SK-N-SH (cell line): ENCODE measurements at regions of chr17 and their contacts with region 1.

Region 1: GRCh38 chr17:7989781-7990655 is 12.4 kb upstream of the GUCY2D start:
- DNase-seq: peak; percentile 93
- H3K4me3 ChIP-seq: peak overlapping the region; percentile 57 to 72
- H3K27ac ChIP-seq: peak overlapping the region in 1 of 2 experiments; percentile 47; a peak in 1 of 4 replicates
- H3K4me1 ChIP-seq: peaks cover 0 to 4% of the 10 kb centered on the region in 2 experiments; a peak in 1 of 4 replicates
- H3K27me3 ChIP-seq: no peaks in the 10 kb centered on the region
- CTCF ChIP-seq: peak; percentile 93
- EP300 ChIP-seq: no peak; a peak in 1 of 4 replicates
- RAD21 ChIP-seq: peak; percentile 59

Region 2: GRCh38 chr17:7745748-7746470 is 244.1 kb before region 1 on chr17:
- CTCF ChIA-PET with region 1: interaction called, 24 read pairs
- POLR2A ChIA-PET with region 1: no interaction called
- DNase-seq: no peak
- H3K4me3 ChIP-seq: no peak overlapping the region
- H3K27ac ChIP-seq: peak overlapping the region; percentile 13 to 61; a peak in 3 of 4 replicates
- H3K4me1 ChIP-seq: peaks cover 6 to 29% of the 10 kb centered on the region in 2 experiments; a peak in 2 of 4 replicates
- H3K27me3 ChIP-seq: no peaks in the 10 kb centered on the region
- CTCF ChIP-seq: peak; percentile 42; the same call in 1 of the 2 replicates
- EP300 ChIP-seq: no peak
- RAD21 ChIP-seq: no peak

Region 3: GRCh38 chr17:7803981-7804380 is 186.0 kb before region 1 on chr17:
- CTCF ChIA-PET with region 1: no interaction called
- POLR2A ChIA-PET with region 1: no interaction called
- DNase-seq: no peak
- H3K4me3 ChIP-seq: no peak overlapping the region
- H3K27ac ChIP-seq: no peak overlapping the region
- H3K4me1 ChIP-seq: no peaks in the 10 kb centered on the region
- H3K27me3 ChIP-seq: no peaks in the 10 kb centered on the region; the same call in 1 of the 2 replicates
- CTCF ChIP-seq: no peak
- EP300 ChIP-seq: no peak
- RAD21 ChIP-seq: no peak

Region 4: GRCh38 chr17:7862692-7863437 is 127.2 kb before region 1 on chr17:
- CTCF ChIA-PET with region 1: interaction called, 59 read pairs
- POLR2A ChIA-PET with region 1: no interaction called
- DNase-seq: peak; percentile 71
- H3K4me3 ChIP-seq: no peak overlapping the region; a peak in 1 of 4 replicates
- H3K27ac ChIP-seq: peak overlapping the region in 1 of 2 experiments; percentile 39; a peak in 1 of 4 replicates
- H3K4me1 ChIP-seq: peaks cover 9 to 19% of the 10 kb centered on the region in 2 experiments; a peak in 2 of 4 replicates
- H3K27me3 ChIP-seq: no peaks in the 10 kb centered on the region
- CTCF ChIP-seq: peak; percentile 87
- EP300 ChIP-seq: no peak
- RAD21 ChIP-seq: peak; percentile 87

Region 5: DNA sequence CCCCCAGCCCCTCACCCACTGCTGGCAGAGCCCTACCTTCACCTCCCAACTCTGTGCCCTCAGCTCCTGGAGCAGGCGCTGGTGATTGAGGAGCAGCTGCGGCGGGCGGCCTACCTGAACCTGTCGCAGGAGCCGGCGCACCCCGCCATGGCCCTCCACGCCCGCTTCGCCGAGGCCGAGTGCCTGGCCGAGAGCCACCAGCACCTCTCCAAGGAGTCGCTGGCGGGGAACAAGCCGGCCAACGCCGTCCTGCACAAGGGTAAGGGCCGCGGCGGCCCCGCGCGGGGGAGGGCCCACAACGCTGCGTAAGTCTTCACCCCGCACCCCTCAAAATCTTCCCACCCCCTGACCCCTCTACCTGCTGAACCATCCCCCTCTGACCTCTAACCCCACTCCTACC is 80.9 kb before region 1 on chr17:
- CTCF ChIA-PET with region 1: interaction called, 90 read pairs
- POLR2A ChIA-PET with region 1: interaction called, 4 read pairs
- DNase-seq: no peak
- H3K4me3 ChIP-seq: no peak overlapping the region
- H3K27ac ChIP-seq: no peak overlapping the region
- H3K4me1 ChIP-seq: no peaks in the 10 kb centered on the region
- H3K27me3 ChIP-seq: no peaks in the 10 kb centered on the region
- CTCF ChIP-seq: no peak
- EP300 ChIP-seq: no peak
- RAD21 ChIP-seq: no peak

Region 6: DNA sequence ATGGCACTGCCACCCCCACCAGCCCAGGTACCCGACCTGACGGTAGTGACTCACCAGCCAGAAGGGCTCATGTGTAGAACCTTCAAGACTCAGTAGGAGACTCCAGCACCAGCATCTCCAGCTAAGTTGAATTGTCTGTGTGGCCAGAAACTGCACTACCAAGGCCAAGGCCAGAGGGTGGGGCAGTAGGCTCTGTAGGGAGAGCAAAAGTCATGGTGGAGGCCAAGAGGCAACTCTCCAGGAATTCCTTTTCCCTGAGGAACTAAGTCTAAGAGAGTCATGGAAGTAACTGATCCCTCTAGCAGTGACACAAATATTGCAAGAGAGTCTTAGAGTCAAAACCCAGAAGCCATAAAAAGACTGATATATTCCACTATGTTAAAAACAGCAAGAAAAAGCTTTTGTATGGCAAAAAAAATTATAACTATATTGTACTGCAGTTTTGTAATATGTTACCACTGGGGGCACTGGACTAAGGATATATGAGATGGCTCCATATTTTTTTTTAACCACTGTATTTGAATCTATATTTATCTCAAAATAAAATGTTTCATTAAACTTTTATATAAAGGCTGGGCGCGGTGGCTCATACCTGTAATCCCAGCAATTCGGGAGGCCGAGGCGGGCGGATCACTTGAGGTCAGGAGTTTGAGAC is 17.8 kb before region 1 on chr17:
- CTCF ChIA-PET with region 1: interaction called, 47 read pairs
- POLR2A ChIA-PET with region 1: no interaction called
- DNase-seq: no peak
- H3K4me3 ChIP-seq: no peak overlapping the region
- H3K27ac ChIP-seq: no peak overlapping the region
- H3K4me1 ChIP-seq: no peaks in the 10 kb centered on the region
- H3K27me3 ChIP-seq: no peaks in the 10 kb centered on the region
- CTCF ChIP-seq: peak; percentile 56
- EP300 ChIP-seq: no peak
- RAD21 ChIP-seq: no peak

Region 7: GRCh38 chr17:8029135-8029534 is 39.1 kb after region 1 on chr17:
- CTCF ChIA-PET with region 1: interaction called, 17 read pairs
- POLR2A ChIA-PET with region 1: no interaction called
- DNase-seq: no peak
- H3K4me3 ChIP-seq: no peak overlapping the region
- H3K27ac ChIP-seq: no peak overlapping the region
- H3K4me1 ChIP-seq: no peaks in the 10 kb centered on the region
- H3K27me3 ChIP-seq: peaks cover 20% of the 10 kb centered on the region
- CTCF ChIP-seq: no peak
- EP300 ChIP-seq: no peak
- RAD21 ChIP-seq: no peak